ENCODE measurements at regions of chr2 and their contacts with region 1.

Region 1: DNA sequence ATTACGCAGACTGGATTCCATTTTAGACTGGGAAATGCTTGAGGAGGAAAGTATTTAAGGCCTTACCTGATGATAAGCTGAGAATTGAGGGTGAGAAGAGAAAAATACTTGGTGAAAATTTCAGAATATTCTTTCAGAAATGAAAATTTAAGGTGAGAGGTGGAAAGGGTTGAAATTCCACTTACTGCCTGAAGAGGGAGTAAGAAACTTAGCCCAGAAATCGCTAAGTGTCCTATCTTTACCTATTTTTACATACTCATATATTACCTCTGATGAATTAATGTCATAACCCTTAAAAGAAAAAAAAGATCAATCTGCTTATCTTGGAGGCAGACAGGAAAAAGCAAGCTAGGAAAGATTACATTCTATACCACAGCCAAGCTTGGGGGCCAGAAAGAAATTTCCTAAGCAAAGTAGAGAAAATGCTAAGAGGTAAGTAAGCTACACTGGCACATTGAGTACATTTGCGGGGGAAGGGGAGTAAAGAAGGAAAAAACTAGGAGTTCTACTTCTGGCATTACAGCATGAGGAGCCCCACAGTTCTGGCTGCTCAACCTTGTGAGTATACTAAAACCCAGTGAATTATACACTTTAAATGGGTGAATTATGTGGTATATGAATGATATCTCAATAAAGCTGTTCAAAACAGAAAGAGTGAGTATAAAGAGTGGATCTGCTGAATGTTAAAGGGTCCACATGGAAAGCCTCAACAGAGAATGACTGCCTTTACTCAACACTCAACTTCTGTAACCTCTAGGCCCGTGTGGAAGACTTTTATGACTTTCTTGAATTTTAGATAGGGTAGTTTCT is 33.8 kb downstream of the SMC6 start:
- DNase-seq: no peak
- ATAC-seq: no peak

Region 2: GRCh38 chr2:17035010-17035409 is 684.8 kb before region 1 on chr2:
- intact Hi-C with region 1: no loop called
- DNase-seq: no peak
- ATAC-seq: no peak

Region 3: DNA sequence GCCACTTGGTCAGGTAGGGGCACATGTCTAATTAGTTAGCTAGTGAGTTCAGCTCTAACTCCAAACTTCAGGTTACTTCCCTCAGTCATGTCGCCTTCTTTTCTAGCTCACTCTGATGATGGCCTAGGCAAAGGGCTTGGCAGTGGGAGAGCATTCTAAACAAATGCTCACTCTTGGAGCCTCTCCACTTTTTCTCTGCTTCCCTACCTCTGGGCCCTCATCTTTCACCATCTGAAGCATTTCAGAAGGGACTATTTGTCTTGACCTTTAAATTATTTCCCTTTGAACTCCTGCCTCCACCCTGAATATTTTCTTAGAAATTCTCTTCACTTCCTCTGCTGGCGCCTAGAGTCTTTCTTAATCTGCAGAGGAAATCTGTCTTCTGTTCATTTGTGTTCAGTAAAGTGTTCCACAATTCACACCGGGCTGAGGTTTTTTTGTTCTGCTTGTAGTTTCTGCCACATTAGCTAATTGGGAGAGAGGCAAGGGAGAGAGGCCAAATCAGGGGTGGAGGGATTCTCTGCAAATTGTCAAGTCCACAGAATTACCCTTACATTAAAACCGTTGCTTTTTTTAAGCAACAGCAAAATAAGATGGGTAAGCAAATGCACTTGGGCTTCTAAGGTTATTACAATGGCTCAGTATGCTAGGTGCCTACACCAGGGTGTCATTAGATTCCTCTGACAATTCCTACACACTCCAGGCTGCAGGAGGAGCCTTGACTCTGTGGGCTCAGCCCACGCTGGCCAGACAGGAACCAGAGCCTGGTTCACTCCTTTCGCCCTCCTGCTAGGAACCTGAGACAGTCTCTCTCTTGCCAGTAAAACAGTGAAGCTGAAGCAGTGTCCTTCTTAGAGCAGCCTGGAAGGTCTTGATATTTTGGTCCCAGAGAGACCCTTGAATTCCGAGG is 102.0 kb after region 1 on chr2:
- intact Hi-C with region 1: loop called (anchors 5 to 10 kb)
- DNase-seq: no peak
- ATAC-seq: peak; percentile 60 to 64

Region 4: GRCh38 chr2:17827306-17827705 is 107.5 kb after region 1 on chr2:
- intact Hi-C with region 1: loop called (anchors 5 to 10 kb)
- DNase-seq: no peak
- ATAC-seq: no peak